ENCODE measurements at regions of chr13 and their contacts with region 1.

Region 1: DNA sequence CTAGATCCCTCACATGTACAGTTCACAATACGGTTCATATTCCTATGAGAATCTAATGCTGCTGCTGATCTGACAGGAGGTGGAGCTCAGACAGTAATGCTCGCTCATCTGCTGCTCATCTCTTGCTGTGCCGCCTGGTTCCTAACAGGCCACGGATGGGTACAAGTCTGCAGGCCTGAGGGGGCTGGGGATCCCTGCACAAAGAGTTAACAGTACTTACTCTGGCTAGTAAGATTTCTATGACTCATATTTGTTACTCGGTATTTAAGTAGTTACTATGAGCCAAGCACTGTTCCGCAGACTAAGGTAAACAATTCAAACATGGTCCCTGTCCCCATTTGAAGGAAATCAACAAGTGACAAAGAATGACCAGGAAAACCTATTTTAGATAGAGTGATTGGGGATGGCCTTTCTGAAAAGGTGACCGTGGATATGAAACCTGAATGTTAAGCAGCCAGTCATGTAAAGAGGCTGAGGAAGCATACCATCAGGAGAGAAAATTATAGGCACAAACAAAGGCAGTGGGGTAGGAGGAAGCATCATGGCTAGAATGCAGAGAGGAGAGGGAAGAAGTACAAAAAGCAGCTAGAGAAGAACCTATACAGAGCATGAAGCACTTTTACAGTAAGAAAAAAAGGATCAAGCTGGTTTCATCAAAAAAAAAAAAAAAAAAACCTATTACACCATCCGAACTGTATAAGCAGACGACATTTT is 20.5 kb upstream of the WBP4 start:
- DNase-seq: no peak
- H3K4me3 ChIP-seq: no peak overlapping the region
- H3K27ac ChIP-seq: no peak overlapping the region
- H3K4me1 ChIP-seq: no peaks in the 10 kb centered on the region
- H3K27me3 ChIP-seq: no peaks in the 10 kb centered on the region
- CTCF ChIP-seq: no peak

Region 2: GRCh38 chr13:39876258-39876657 is 1164.5 kb before region 1 on chr13:
- CTCF ChIA-PET with region 1: no interaction called
- POLR2A ChIA-PET with region 1: no interaction called
- intact Hi-C with region 1: no loop called
- DNase-seq: no peak
- H3K4me3 ChIP-seq: no peak overlapping the region
- H3K27ac ChIP-seq: no peak overlapping the region
- H3K4me1 ChIP-seq: no peaks in the 10 kb centered on the region
- H3K27me3 ChIP-seq: no peaks in the 10 kb centered on the region
- CTCF ChIP-seq: no peak

Region 3: GRCh38 chr13:41054212-41054877 is 13.6 kb after region 1 on chr13:
- CTCF ChIA-PET with region 1: no interaction called
- POLR2A ChIA-PET with region 1: interaction called, 18 read pairs
- intact Hi-C with region 1: no loop called
- DNase-seq: peak in 1 of 2 experiments; percentile 9
- H3K4me3 ChIP-seq: no peak overlapping the region
- H3K27ac ChIP-seq: peak overlapping the region; percentile 49
- H3K4me1 ChIP-seq: peaks cover 23% of the 10 kb centered on the region
- H3K27me3 ChIP-seq: no peaks in the 10 kb centered on the region
- CTCF ChIP-seq: peak; percentile 56

Measured in PC-9 (cell line).